H1 (cell line): ENCODE measurements at regions of chr11 and their contacts with region 1.

Region 1: GRCh38 chr11:120172054-120172911 is 34.4 kb upstream of the TRIM29 start:
- DNase-seq: peak; percentile 49 to 79
- H3K4me3 ChIP-seq: no peak overlapping the region
- H3K27ac ChIP-seq: no peak overlapping the region
- H3K4me1 ChIP-seq: peaks cover 0 to 15% (median 3%) of the 10 kb centered on the region in 4 experiments; a peak in 5 of 7 replicates
- H3K27me3 ChIP-seq: peaks cover 21 to 75% (median 47%) of the 10 kb centered on the region in 4 experiments
- CTCF ChIP-seq: peak; percentile 84 to 96 (median 88)
- EP300 ChIP-seq: no peak
- POLR2A ChIP-seq: no peak
- RAD21 ChIP-seq: peak; percentile 99

Region 2: DNA sequence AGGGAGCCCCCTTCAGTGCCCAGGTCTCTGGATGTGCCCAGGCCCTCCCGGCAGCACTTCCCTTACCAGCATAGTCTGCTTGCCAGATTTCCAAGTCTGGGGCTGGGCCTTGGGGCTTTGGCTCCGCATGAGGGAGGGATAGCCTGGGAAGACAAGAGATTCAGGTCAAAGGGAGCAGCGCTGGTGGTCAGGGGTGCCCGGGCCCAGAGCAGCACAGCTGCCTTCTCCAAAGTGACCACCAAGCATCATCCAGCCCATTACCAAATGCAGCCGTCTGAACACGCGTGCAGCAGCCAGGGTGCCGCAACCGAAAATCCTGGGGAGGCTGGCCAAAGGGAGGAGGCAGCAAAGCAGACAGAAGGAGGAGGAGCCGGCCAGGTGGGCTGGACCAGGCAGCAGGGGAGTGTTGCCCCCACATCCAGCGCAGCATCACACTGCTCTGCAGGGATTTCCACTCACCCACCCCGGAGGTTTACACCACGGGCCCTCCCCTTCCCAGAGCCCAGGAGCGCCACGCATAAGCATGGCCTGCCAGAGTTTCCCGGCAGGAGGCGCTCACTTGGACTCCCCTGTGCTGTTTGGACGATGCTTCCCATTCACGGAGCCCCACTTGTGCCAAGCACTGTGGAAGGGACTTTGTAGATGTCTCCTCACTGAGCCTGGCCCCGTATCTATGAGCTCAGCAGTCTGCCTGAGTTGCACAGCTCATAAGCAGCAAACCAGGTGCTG is 56.8 kb before region 1 on chr11:
- CTCF ChIA-PET with region 1: interaction called, 34 read pairs
- POLR2A ChIA-PET with region 1: no interaction called
- DNase-seq: peak in 1 of 2 experiments; percentile 58
- H3K4me3 ChIP-seq: no peak overlapping the region
- H3K27ac ChIP-seq: no peak overlapping the region
- H3K4me1 ChIP-seq: peaks cover 0 to 5% (median 2%) of the 10 kb centered on the region in 4 experiments; a peak in 4 of 7 replicates
- H3K27me3 ChIP-seq: no peaks in the 10 kb centered on the region; a peak in 2 of 7 replicates
- CTCF ChIP-seq: peak; percentile 15 to 32 (median 30)
- EP300 ChIP-seq: no peak
- POLR2A ChIP-seq: no peak
- RAD21 ChIP-seq: 0 out of 4 replicates have a peak, but pooled peaks of 1 of the 2 experiments have one; percentile 16

Region 3: GRCh38 chr11:120182790-120183491 is 10.7 kb after region 1 on chr11:
- CTCF ChIA-PET with region 1: interaction called, 73 read pairs
- POLR2A ChIA-PET with region 1: interaction called, 5 read pairs
- DNase-seq: peak in 1 of 2 experiments; percentile 76
- H3K4me3 ChIP-seq: no peak overlapping the region
- H3K27ac ChIP-seq: no peak overlapping the region
- H3K4me1 ChIP-seq: peaks cover 1 to 14% (median 4%) of the 10 kb centered on the region in 4 experiments; a peak in 4 of 7 replicates
- H3K27me3 ChIP-seq: peaks cover 0 to 28% (median 21%) of the 10 kb centered on the region in 4 experiments; a peak in 4 of 7 replicates
- CTCF ChIP-seq: peak; percentile 58 to 83 (median 64)
- EP300 ChIP-seq: no peak
- POLR2A ChIP-seq: no peak
- RAD21 ChIP-seq: peak; percentile 49 to 64

Region 4: DNA sequence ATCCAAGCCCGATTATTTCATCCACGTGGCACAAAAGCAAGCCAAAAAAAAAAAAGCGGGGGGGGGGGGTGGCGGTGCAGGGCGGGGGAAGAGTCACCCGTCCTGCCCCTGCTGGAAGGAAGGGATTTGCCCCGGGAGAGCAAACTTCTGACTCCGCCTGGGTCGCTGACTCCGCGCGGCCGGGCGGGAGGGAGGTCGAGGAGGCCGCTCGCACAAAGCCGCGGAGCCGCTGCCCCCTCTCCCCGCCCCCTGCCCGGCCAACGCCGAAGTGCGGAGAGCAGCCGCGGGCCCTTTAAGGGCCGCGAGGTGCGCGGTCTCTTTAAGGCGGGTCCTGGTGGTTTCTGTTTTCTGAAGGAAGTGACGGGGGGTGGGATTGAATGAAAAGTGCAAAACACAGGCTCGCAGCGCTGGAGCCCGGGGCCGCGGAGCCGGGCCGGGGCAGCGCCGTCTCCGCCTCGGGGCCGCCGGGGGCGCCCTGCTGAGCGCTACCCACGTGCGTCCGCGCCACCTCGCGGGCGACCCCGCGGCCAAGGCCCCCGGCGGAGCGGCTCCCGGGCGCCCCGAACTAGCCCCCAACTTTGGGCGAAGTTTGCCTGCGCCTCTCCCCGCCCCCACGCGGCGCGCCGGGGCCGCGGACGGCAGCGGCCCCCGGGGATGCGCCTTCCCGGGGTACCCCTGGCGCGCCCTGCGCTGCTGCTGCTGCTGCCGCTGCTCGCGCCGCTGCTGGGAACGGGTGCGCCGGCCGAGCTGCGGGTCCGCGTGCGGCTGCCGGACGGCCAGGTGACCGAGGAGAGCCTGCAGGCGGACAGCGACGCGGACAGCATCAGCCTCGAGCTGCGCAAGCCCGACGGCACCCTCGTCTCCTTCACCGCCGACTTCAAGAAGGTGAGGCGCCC is 38.6 kb after region 1 on chr11 and contains the start of gene OAF:
- CTCF ChIA-PET with region 1: interaction called, 394 read pairs
- POLR2A ChIA-PET with region 1: no interaction called
- DNase-seq: peak; percentile 58 to 85
- H3K4me3 ChIP-seq: peak within 1 kb of the TSS; percentile 43 to 68 (median 58)
- H3K27ac ChIP-seq: no peak within 1 kb of the TSS
- H3K4me1 ChIP-seq: peaks cover 4 to 12% (median 8%) of the 10 kb centered on the region in 4 experiments
- H3K27me3 ChIP-seq: peaks cover 67 to 94% (median 87%) of the 10 kb centered on the region in 4 experiments
- CTCF ChIP-seq: no peak
- EP300 ChIP-seq: no peak
- POLR2A ChIP-seq: no peak
- RAD21 ChIP-seq: no peak
- total RNA-seq, gene OAF: 1.1 and 1.3 TPM in 2 replicates

Region 5: GRCh38 chr11:120303004-120303637 is 130.8 kb after region 1 on chr11:
- CTCF ChIA-PET with region 1: interaction called, 110 read pairs
- POLR2A ChIA-PET with region 1: no interaction called
- DNase-seq: peak; percentile 64 to 87
- H3K4me3 ChIP-seq: no peak overlapping the region
- H3K27ac ChIP-seq: no peak overlapping the region
- H3K4me1 ChIP-seq: peaks cover 0 to 14% (median 8%) of the 10 kb centered on the region in 4 experiments; a peak in 6 of 7 replicates
- H3K27me3 ChIP-seq: peaks cover 0 to 4% (median 0%) of the 10 kb centered on the region in 4 experiments; a peak in 2 of 7 replicates
- CTCF ChIP-seq: peak; percentile 96 to 100 (median 100)
- EP300 ChIP-seq: no peak
- POLR2A ChIP-seq: no peak
- RAD21 ChIP-seq: peak; percentile 87 to 92

Region 6: DNA sequence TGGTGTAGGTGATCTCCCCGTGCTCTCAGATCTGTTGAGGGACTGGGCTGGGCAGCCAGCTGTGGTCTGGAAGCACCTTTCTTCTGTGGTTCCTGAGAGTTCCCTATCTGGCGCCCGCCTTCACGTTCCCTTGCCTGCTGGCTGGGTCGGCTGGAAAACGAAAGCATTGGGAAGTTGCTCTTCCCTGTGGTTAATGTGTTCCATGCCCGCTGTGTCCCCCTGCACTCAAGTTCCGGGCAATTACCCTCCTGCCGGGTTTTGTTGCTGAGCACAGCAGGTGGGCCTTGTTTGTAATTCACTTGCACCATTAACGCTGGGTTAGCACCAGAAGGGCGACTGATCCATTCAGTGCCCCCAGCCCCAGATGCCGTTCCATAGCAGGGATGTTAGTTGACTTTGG is 473.4 kb after region 1 on chr11:
- CTCF ChIA-PET with region 1: no interaction called
- POLR2A ChIA-PET with region 1: no interaction called
- DNase-seq: peak; percentile 86 to 90
- H3K4me3 ChIP-seq: peak overlapping the region in 2 of 4 experiments; percentile 1 to 24; a peak in 1 of 8 replicates
- H3K27ac ChIP-seq: no peak overlapping the region
- H3K4me1 ChIP-seq: peaks cover 7 to 20% (median 11%) of the 10 kb centered on the region in 4 experiments
- H3K27me3 ChIP-seq: peaks cover 52 to 92% (median 82%) of the 10 kb centered on the region in 4 experiments
- CTCF ChIP-seq: no peak
- EP300 ChIP-seq: peak in 1 of 2 experiments; percentile 94; a peak in 2 of 3 replicates
- POLR2A ChIP-seq: no peak
- RAD21 ChIP-seq: peak in 1 of 2 experiments; percentile 26; a peak in 2 of 4 replicates